PC-9 (cell line): ENCODE measurements at regions of chr12 and their contacts with region 1.

Region 1: GRCh38 chr12:48826209-48826894 is 8.1 kb downstream of the CACNB3 start:
- DNase-seq: peak in 1 of 2 experiments; percentile 64
- H3K4me3 ChIP-seq: no peak overlapping the region
- H3K27ac ChIP-seq: no peak overlapping the region
- H3K4me1 ChIP-seq: no peaks in the 10 kb centered on the region
- H3K27me3 ChIP-seq: no peaks in the 10 kb centered on the region
- CTCF ChIP-seq: no peak

Region 2: DNA sequence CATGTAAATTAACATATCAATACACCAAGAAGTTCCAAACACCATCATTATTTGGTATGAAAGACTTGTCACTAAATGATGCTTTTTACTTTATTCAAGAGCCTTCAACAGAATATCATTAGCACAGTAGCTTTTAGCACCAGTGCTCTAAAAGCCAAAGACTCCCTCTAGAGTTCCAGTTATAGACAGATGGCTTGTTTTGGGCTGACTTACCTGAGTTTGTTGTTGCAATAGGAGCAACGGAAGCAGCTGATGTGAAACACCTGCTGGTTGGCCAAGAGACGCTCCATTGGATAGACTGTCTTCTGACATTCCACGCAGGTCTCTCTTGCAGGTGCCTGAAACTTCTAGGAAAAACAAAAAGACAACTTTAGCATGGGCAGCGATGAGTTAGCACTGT is 1355.3 kb after region 1 on chr12:
- CTCF ChIA-PET with region 1: interaction called, 11 read pairs
- POLR2A ChIA-PET with region 1: no interaction called
- intact Hi-C with region 1: no loop called
- DNase-seq: no peak
- H3K4me3 ChIP-seq: no peak overlapping the region
- H3K27ac ChIP-seq: no peak overlapping the region
- H3K4me1 ChIP-seq: no peaks in the 10 kb centered on the region
- H3K27me3 ChIP-seq: no peaks in the 10 kb centered on the region
- CTCF ChIP-seq: no peak